Caco-2 (cell line): ENCODE measurements at regions of chr6 and their contacts with region 1.

Region 1: DNA sequence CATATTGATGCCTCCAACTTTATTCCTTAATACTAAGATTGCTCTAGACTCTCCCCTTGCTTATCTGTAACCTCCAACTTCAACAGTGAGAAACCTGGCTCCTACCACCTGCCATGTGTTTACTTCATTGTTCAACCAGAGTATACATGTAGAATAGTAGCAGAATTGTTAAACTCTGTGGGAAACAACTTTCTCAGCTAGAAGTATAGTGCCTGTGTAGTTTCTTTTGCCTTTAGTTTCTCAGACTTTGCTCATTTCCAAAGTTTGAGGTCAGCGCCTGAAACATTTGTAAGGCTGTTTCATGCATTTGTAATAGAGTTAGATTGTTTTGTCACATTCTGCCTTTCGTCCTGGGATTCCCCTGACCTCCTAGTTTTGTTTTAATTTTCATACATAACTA is 34.9 kb upstream of the HECA start:
- DNase-seq: no peak
- H3K4me3 ChIP-seq: no peak overlapping the region
- H3K4me3 Mint-ChIP-seq: no peak overlapping the region
- H3K27ac Mint-ChIP-seq: no peak overlapping the region
- H3K4me1 ChIP-seq: no peaks in the 10 kb centered on the region
- H3K4me1 Mint-ChIP-seq: no peaks in the 10 kb centered on the region
- H3K27me3 ChIP-seq: no peaks in the 10 kb centered on the region
- H3K27me3 Mint-ChIP-seq: no peaks in the 10 kb centered on the region
- CTCF ChIP-seq: no peak

Region 2: DNA sequence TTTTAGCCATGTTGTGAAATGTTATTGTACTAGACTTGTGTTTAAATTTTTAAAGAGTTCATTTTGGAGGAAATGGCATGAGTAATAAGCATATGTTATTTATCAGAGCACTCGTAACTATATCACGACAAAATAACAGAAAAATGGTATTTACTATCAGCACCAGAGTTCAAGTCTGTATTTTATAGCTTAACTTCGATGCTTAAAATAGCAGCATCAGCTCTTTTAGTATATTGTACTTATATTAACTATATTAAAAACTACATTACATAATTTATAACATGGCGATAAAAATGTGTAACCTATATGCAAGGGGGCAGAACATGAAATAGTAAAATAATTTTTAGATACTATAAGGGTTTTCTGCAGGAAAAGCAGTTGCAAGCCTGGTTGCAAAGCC is 18.5 kb before region 1 on chr6:
- CTCF ChIA-PET with region 1: no interaction called
- POLR2A ChIA-PET with region 1: no interaction called
- intact Hi-C with region 1: loop called (anchors 1 kb)
- DNase-seq: no peak
- H3K4me3 ChIP-seq: no peak overlapping the region
- H3K4me3 Mint-ChIP-seq: no peak overlapping the region
- H3K27ac Mint-ChIP-seq: peak overlapping the region; percentile 31
- H3K4me1 ChIP-seq: peaks cover 23% of the 10 kb centered on the region
- H3K4me1 Mint-ChIP-seq: peaks cover 16% of the 10 kb centered on the region
- H3K27me3 ChIP-seq: no peaks in the 10 kb centered on the region
- H3K27me3 Mint-ChIP-seq: no peaks in the 10 kb centered on the region
- CTCF ChIP-seq: no peak

Region 3: GRCh38 chr6:139112146-139112545 is 12.2 kb after region 1 on chr6:
- CTCF ChIA-PET with region 1: no interaction called
- POLR2A ChIA-PET with region 1: no interaction called
- intact Hi-C with region 1: no loop called
- DNase-seq: no peak
- H3K4me3 ChIP-seq: no peak overlapping the region
- H3K4me3 Mint-ChIP-seq: no peak overlapping the region
- H3K27ac Mint-ChIP-seq: no peak overlapping the region
- H3K4me1 ChIP-seq: no peaks in the 10 kb centered on the region
- H3K4me1 Mint-ChIP-seq: no peaks in the 10 kb centered on the region
- H3K27me3 ChIP-seq: no peaks in the 10 kb centered on the region
- H3K27me3 Mint-ChIP-seq: no peaks in the 10 kb centered on the region
- CTCF ChIP-seq: no peak

Region 4: DNA sequence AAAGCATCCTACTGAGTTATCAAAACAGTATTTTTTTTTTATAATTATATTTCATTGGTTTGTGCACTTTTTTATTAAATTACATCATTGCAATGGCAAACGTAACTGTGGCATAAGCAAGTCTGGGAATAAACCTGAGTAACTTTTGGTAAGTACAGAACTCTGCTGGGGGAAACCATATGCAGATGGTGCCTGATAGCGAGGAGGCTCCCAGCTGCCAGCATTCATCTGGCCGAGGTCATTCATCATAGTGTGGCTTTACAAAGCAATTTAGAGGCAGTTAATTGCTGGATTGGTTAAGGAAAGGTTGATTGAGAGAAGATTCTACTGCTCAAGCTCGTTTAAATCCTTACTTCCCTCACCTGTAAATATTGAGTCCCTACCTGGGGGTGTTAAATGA is 87.5 kb after region 1 on chr6:
- CTCF ChIA-PET with region 1: no interaction called
- POLR2A ChIA-PET with region 1: no interaction called
- intact Hi-C with region 1: no loop called
- DNase-seq: no peak
- H3K4me3 ChIP-seq: no peak overlapping the region
- H3K4me3 Mint-ChIP-seq: no peak overlapping the region
- H3K27ac Mint-ChIP-seq: no peak overlapping the region
- H3K4me1 ChIP-seq: no peaks in the 10 kb centered on the region
- H3K4me1 Mint-ChIP-seq: no peaks in the 10 kb centered on the region
- H3K27me3 ChIP-seq: no peaks in the 10 kb centered on the region
- H3K27me3 Mint-ChIP-seq: no peaks in the 10 kb centered on the region
- CTCF ChIP-seq: no peak